ENCODE measurements at regions of chr6 and their contacts with region 1.

Region 1: GRCh38 chr6:90304308-90304707 is 7.7 kb upstream of the BACH2 start:
- DNase-seq: peak; percentile 96
- H3K4me3 ChIP-seq: peak overlapping the region; percentile 46
- H3K27ac ChIP-seq: peak overlapping the region; percentile 87
- H3K4me1 ChIP-seq: peaks cover 84% of the 10 kb centered on the region
- CTCF ChIP-seq: no peak

Region 2: GRCh38 chr6:90216072-90216977 is 88.0 kb before region 1 on chr6:
- CTCF ChIA-PET with region 1: no interaction called
- POLR2A ChIA-PET with region 1: no interaction called
- intact Hi-C with region 1: no loop called
- DNase-seq: peak; percentile 70
- H3K4me3 ChIP-seq: peak overlapping the region; percentile 18
- H3K27ac ChIP-seq: peak overlapping the region; percentile 60
- H3K4me1 ChIP-seq: peaks cover 79% of the 10 kb centered on the region
- CTCF ChIP-seq: peak; percentile 60

Region 3: GRCh38 chr6:90369024-90369519 is 64.8 kb after region 1 on chr6:
- CTCF ChIA-PET with region 1: no interaction called
- POLR2A ChIA-PET with region 1: interaction called, 54 read pairs
- intact Hi-C with region 1: no loop called
- DNase-seq: no peak
- H3K4me3 ChIP-seq: no peak overlapping the region
- H3K27ac ChIP-seq: no peak overlapping the region
- H3K4me1 ChIP-seq: peaks cover 56% of the 10 kb centered on the region
- CTCF ChIP-seq: no peak

Region 4: DNA sequence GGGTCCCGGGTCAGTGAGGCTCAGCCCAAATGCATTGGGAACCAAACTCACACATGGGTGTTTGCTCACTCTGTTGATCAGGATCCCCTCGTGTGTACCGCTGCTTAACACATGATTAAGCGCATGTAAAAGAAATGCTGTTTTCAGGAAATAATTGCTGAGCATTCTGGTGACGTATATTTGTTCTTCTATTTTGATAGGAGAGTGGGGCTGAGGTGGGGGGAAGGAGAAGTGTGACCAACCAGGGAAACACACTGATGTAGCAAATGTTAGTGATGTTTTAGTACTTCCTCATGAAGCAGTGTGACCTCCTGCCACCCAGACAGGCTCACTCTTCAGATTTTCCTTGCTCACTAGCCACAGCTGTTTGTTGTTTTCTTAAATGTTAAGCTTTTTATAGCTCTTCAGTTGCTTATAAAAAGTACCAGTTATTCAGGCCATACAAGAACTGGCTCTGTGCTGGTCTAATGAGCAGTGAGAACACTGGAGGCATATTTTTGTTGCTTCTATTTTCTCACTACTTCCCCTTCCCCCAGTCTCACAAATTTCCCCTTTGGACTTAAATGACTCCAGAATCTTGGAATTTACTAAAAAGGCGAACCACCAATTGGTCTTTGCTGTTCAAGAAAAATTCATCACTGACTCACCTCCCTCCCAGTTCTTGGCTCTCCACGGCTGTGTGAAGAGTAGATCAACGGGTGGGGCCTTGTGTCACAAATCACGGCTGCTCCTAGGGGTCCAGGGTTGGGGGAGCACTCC is 71.6 kb after region 1 on chr6:
- CTCF ChIA-PET with region 1: interaction called, 25 read pairs
- POLR2A ChIA-PET with region 1: interaction called, 54 read pairs
- intact Hi-C with region 1: loop called (anchors 2 kb)
- DNase-seq: peak; percentile 97
- H3K4me3 ChIP-seq: peak overlapping the region; percentile 68
- H3K27ac ChIP-seq: peak overlapping the region; percentile 100
- H3K4me1 ChIP-seq: peaks cover 98% of the 10 kb centered on the region
- CTCF ChIP-seq: no peak

Region 5: DNA sequence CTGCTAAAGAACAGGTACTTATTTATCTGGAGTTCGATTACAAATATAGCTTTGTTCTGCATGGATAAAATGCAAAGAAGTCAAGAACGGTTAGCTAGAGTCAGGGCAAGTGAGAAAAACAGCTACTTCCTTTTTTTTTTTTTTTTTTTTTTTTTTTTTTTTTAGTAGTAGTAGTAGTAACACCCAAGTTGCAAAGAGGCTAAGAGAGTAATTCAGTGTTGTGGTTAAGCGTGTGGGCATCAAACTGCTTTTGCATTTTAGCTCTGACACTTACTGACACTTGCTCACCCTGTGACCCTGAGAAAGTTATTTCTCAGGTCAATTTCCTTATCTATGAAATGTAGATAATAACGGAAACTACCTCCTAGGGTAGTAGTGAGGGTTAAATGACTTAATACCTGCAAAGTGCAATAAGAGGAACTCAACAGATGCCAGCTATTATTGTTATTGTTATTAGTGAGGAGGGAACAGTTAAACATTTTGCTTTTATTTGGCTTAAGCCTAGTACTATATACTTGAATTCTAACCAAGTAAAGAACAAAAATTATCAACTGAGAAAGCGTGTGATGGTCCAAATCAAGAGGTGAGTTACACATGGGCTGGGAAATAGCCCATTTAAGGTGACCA is 79.0 kb after region 1 on chr6:
- CTCF ChIA-PET with region 1: interaction called, 4 read pairs
- POLR2A ChIA-PET with region 1: interaction called, 38 read pairs
- intact Hi-C with region 1: no loop called
- DNase-seq: peak; percentile 89
- H3K4me3 ChIP-seq: peak overlapping the region; percentile 59
- H3K27ac ChIP-seq: peak overlapping the region; percentile 97
- H3K4me1 ChIP-seq: peaks cover 97% of the 10 kb centered on the region
- CTCF ChIP-seq: no peak

Measured in OCI-LY7 (cell line).